ENCODE measurements at regions of chr16 and their contacts with region 1.

Region 1: DNA sequence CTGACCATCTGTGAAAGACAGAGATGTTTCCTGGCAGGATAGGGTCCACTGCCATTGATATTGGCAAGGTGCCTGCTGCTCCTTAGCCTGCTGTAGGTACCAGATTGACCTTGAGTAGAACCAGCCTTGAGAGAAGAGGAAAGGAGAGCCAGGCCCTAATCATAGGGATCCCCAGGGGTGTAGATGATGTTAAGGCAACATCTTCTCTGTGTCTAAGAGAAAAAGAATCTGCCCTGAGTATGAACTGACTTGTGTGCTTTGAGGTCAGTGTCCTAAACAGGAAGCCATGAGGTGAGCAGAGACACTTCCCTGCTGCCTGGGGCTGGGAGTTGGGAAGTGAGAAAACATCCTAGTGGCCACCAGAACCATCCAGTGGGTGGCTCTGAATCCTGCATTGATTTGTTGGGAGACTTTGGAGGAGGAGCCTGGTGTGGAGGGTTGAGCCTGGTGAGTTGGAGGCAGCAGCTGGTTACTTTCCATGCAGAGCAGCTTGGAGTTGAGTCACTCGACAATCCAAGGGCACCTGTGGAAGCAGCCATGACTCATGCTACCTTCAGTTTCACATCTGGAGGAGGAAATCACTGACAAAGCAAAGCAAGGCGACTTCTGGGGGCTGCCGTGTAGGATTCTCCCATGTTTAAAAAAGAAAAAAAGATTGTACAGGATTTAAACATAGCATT is 47.8 kb downstream of the BMERB1 start:
- DNase-seq: peak; percentile 98
- H3K4me3 ChIP-seq: no peak overlapping the region
- H3K27ac ChIP-seq: peak overlapping the region; percentile 32
- H3K4me1 ChIP-seq: peaks cover 13% of the 10 kb centered on the region
- H3K27me3 ChIP-seq: no peaks in the 10 kb centered on the region
- CTCF ChIP-seq: peak in 1 of 2 donors; percentile 31

Region 2: GRCh38 chr16:15415411-15416037 is 66.7 kb before region 1 on chr16:
- CTCF ChIA-PET with region 1: no interaction called
- dilution Hi-C with region 1: no loop called
- in situ Hi-C with region 1: no loop called
- intact Hi-C with region 1: no loop called
- DNase-seq: peak; percentile 72
- H3K4me3 ChIP-seq: no peak overlapping the region
- H3K27ac ChIP-seq: peak overlapping the region; percentile 88
- H3K4me1 ChIP-seq: peaks cover 14% of the 10 kb centered on the region
- H3K27me3 ChIP-seq: no peaks in the 10 kb centered on the region
- CTCF ChIP-seq: no peak

Region 3: DNA sequence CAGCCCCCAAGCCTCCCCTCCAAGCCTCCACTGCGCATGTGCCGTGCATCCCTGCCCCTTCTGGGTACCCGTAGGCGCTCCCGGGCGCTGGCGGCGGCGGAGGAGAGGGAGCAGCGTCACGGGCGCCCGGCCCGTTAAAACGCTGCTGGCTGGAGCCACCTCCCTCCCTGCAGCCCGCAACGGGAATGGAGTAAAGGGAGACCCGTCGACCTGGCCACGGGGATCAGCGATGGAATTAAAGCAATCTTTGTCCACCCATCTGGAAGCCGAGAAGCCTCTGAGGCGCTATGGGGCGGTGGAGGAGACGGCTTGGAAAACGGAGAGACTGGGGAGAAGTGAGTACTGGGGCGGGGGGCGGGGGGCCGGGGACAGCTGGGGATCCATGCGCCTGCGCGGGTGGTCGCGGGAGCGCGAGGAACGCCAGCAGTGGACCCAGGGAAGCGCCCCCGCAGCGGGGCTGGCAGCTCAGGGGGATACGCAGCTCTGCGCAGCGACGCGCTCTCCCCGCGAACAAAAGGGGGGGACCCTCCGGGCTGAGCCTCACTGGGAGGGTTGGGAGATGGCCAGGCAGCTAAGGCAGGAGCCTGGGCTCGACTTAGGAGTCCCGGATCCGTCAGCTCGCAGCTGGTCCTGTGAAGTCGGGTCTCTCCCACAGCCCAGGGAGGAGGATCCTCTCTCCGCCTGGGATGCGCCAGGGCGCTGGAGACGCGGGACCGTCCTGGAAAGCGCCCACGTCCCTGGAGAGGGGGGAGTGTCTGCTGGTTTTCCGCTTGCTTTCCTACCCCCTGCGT is 47.6 kb before region 1 on chr16 and contains the start of gene BMERB1:
- CTCF ChIA-PET with region 1: no interaction called
- dilution Hi-C with region 1: no loop called
- in situ Hi-C with region 1: no loop called
- intact Hi-C with region 1: no loop called
- DNase-seq: peak; percentile 60
- H3K4me3 ChIP-seq: peak within 1 kb of the TSS; percentile 59 to 87 (median 70)
- H3K27ac ChIP-seq: no peak within 1 kb of the TSS
- H3K4me1 ChIP-seq: peaks cover 7% of the 10 kb centered on the region
- H3K27me3 ChIP-seq: no peaks in the 10 kb centered on the region
- CTCF ChIP-seq: no peak
- total RNA-seq, gene BMERB1: 15.7 to 18.5 TPM

Region 4: DNA sequence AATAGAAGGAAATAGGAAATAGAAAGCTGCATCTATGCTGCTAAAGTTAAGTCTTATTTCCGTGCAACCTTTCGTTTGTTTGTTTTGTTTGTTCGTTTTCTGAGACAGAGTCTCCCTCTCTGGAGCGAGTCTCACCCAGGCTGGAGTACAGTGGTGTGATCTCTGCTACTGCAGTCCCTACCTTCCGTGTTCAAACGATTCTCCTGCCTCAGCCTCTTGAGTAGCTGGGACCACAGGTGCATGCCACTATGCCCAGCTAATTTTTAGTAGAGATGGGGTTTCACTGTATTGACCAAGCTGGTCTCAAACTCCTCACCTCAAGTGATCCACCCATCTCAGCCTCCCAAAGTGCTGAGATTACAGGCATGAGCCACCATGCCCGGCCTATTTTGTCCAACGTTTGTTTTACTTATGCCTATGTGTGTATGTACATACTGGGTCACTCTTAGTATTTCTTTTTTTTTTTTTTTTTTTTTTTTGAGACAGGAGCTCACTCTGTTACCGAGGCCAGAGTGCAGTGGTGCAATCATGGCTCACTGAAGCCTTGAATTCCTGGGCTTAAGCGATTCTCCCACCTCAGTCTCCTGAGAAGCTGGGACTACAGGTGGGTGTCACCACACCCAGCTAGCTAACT is 31.0 kb before region 1 on chr16:
- CTCF ChIA-PET with region 1: no interaction called
- dilution Hi-C with region 1: loop called (anchors 5 kb)
- in situ Hi-C with region 1: no loop called
- intact Hi-C with region 1: no loop called
- DNase-seq: no peak
- H3K4me3 ChIP-seq: no peak overlapping the region
- H3K27ac ChIP-seq: no peak overlapping the region
- H3K4me1 ChIP-seq: no peaks in the 10 kb centered on the region
- H3K27me3 ChIP-seq: no peaks in the 10 kb centered on the region
- CTCF ChIP-seq: no peak

Region 5: GRCh38 chr16:15556130-15556529 is 73.9 kb after region 1 on chr16:
- CTCF ChIA-PET with region 1: no interaction called
- dilution Hi-C with region 1: no loop called
- in situ Hi-C with region 1: no loop called
- intact Hi-C with region 1: no loop called
- DNase-seq: no peak
- H3K4me3 ChIP-seq: no peak overlapping the region
- H3K27ac ChIP-seq: no peak overlapping the region
- H3K4me1 ChIP-seq: no peaks in the 10 kb centered on the region
- H3K27me3 ChIP-seq: no peaks in the 10 kb centered on the region
- CTCF ChIP-seq: no peak

Region 6: GRCh38 chr16:15653227-15653626 is 171.0 kb after region 1 on chr16:
- CTCF ChIA-PET with region 1: no interaction called
- dilution Hi-C with region 1: no loop called
- in situ Hi-C with region 1: no loop called
- intact Hi-C with region 1: no loop called
- DNase-seq: peak; percentile 80
- H3K4me3 ChIP-seq: no peak overlapping the region
- H3K27ac ChIP-seq: peak overlapping the region; percentile 13
- H3K4me1 ChIP-seq: peaks cover 30% of the 10 kb centered on the region
- H3K27me3 ChIP-seq: no peaks in the 10 kb centered on the region
- CTCF ChIP-seq: no peak

Region 7: GRCh38 chr16:15704545-15704987 is 222.4 kb after region 1 on chr16:
- CTCF ChIA-PET with region 1: no interaction called
- dilution Hi-C with region 1: no loop called
- in situ Hi-C with region 1: no loop called
- intact Hi-C with region 1: loop called (anchors 10 kb)
- DNase-seq: peak; percentile 29
- H3K4me3 ChIP-seq: no peak overlapping the region
- H3K27ac ChIP-seq: no peak overlapping the region
- H3K4me1 ChIP-seq: no peaks in the 10 kb centered on the region
- H3K27me3 ChIP-seq: no peaks in the 10 kb centered on the region
- CTCF ChIP-seq: peak; percentile 74 to 82

Measured in mammary epithelial cell (primary cell).